PC-9 (cell line): ENCODE measurements at regions of chr15 and their contacts with region 1.

Region 1: GRCh38 chr15:73650416-73651126 is 17.4 kb upstream of the NPTN start:
- DNase-seq: peak in 1 of 2 experiments; percentile 43
- H3K4me3 ChIP-seq: no peak overlapping the region
- H3K27ac ChIP-seq: no peak overlapping the region
- H3K4me1 ChIP-seq: peaks cover 33% of the 10 kb centered on the region
- H3K27me3 ChIP-seq: no peaks in the 10 kb centered on the region
- CTCF ChIP-seq: no peak

Region 2: DNA sequence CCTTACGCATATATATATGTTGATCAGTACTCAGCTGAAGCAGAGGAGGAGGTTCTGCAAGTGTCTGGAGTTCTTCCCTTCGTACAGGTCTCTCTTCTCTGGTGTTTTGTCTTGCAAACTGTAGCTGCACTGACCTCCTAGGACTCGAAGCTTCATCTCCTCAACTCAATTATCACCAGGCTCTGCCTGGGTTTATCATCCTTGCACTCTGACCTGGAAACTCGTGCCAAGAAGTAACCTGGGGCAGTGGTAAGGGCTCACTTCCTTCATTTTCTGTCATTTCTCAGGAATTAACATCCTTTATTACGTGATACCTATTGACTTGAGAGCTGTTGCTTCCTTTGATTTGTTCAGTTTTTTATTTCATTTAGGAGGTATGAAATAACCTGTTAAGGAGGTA is 193.2 kb before region 1 on chr15:
- CTCF ChIA-PET with region 1: no interaction called
- POLR2A ChIA-PET with region 1: interaction called, 12 read pairs
- intact Hi-C with region 1: no loop called
- DNase-seq: no peak
- H3K4me3 ChIP-seq: no peak overlapping the region
- H3K27ac ChIP-seq: no peak overlapping the region
- H3K4me1 ChIP-seq: no peaks in the 10 kb centered on the region
- H3K27me3 ChIP-seq: no peaks in the 10 kb centered on the region
- CTCF ChIP-seq: no peak

Region 3: GRCh38 chr15:73683777-73684580 is 33.4 kb after region 1 on chr15 and contains the start of gene CD276:
- CTCF ChIA-PET with region 1: no interaction called
- POLR2A ChIA-PET with region 1: no interaction called
- intact Hi-C with region 1: loop called (anchors 1 kb)
- DNase-seq: peak; percentile 58 to 84
- H3K4me3 ChIP-seq: peak within 1 kb of the TSS; percentile 93
- H3K27ac ChIP-seq: peak within 1 kb of the TSS; percentile 66
- H3K4me1 ChIP-seq: peaks cover 34% of the 10 kb centered on the region
- H3K27me3 ChIP-seq: no peaks in the 10 kb centered on the region
- CTCF ChIP-seq: no peak
- total RNA-seq, gene CD276: 82.6 and 91.1 TPM in 2 replicates